Panc1 (cell line): ENCODE measurements at regions of chr17 and their contacts with region 1.

Region 1: DNA sequence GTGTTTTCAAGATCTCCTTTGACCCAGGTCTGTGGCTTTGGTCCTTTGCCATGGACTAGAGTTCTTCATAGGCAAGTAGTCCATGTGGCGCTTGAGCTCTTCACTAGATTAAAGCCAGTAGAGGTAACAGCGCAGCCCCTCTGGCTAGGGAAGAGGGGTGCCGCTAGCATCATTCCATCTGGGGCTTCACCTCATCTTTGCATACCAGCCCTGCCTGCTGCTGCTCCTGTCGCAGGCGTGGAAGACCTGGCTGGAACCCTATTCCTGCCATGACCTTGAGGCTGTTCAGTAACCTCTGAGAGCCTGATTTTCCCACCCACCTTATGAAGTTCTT is 198.4 kb downstream of the MSI2 start:
- DNase-seq: no peak
- ATAC-seq: no peak
- H3K4me3 ChIP-seq: no peak overlapping the region
- H3K27ac ChIP-seq: no peak overlapping the region
- H3K4me1 ChIP-seq: 0 out of 2 replicates have a peak, but pooled peaks cover 3% of the 10 kb centered on the region
- H3K27me3 ChIP-seq: no peaks in the 10 kb centered on the region
- CTCF ChIP-seq: no peak

Region 2: DNA sequence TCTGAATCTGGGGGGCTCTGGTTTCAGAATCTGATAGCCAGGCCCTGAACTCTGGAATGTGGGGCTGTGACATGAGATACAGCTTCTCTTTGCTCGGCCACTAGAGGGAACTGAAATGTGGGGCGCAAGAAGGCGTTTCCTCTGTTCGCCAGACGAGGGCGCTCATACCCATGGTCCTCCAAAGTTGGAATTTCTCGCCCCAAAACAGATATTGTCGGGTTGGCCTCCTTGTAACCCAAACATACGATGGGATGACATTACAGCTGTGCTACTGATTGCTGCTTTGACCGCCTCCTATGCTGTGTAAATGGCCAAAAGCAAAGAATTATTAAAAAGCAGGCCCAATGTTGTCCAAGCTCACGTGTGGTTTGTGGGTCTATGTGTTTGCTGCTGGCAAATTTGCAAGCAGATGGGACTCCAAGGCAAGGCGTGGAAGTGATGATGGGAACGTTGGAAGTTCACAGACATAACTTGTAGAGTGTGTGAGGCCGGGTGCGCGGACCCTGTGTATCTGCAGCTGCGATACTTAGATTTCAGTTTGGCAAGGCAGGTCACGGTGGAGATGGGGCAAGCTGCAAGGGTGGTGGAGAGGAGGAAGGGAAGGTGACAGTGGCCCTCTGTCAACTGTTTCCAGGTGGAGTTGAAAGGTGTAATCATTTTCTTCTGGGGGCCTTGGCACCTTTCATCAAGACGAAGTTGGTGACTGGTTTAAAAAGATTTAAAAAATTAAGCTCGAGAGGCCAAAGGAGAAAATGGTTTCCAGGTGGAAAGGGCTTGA is 211.3 kb before region 1 on chr17:
- CTCF ChIA-PET with region 1: no interaction called
- POLR2A ChIA-PET with region 1: no interaction called
- in situ Hi-C with region 1: no loop called
- intact Hi-C with region 1: no loop called
- DNase-seq: peak; percentile 59
- ATAC-seq: peak; percentile 89
- H3K4me3 ChIP-seq: no peak overlapping the region
- H3K27ac ChIP-seq: no peak overlapping the region
- H3K4me1 ChIP-seq: no peaks in the 10 kb centered on the region
- H3K27me3 ChIP-seq: peaks cover 7% of the 10 kb centered on the region; the same call in 1 of the 2 replicates
- CTCF ChIP-seq: peak; percentile 100

Region 3: GRCh38 chr17:57432520-57433277 is 22.0 kb before region 1 on chr17:
- CTCF ChIA-PET with region 1: no interaction called
- POLR2A ChIA-PET with region 1: no interaction called
- in situ Hi-C with region 1: no loop called
- intact Hi-C with region 1: no loop called
- DNase-seq: no peak
- ATAC-seq: no peak
- H3K4me3 ChIP-seq: no peak overlapping the region
- H3K27ac ChIP-seq: no peak overlapping the region
- H3K4me1 ChIP-seq: no peaks in the 10 kb centered on the region
- H3K27me3 ChIP-seq: no peaks in the 10 kb centered on the region
- CTCF ChIP-seq: no peak

Region 4: DNA sequence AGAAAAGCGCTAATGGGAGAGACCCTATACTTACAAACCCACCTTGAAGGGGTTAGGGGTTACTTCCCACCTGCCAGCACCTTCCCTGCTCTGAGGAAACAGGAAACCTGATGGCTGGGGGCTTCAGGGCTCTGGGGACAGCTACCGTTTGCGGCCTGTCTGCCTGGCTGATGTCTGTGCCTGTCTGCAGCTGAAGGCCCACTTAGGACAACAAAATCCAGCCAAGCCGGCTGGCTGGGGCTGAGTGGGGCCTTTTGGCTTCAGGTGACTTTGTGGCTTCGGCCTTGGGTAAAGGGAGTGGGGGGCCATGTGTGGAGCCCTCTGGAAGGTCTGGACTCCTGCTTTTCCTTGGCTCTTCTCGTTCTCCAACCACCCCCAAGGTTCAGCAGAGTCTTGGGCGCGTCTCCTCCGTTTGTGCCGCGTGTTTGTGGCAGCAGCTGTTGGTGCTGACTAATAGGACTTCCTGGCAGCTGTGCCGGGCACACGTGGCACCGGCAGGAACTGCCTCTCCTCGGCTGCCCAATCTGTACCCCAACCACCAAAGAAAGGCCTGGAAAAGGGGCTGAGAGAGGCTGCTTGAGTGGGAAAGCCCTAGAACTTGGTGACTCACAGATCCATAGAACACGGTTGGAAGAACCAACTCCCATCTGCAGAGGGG is 11.7 kb before region 1 on chr17:
- CTCF ChIA-PET with region 1: no interaction called
- POLR2A ChIA-PET with region 1: no interaction called
- in situ Hi-C with region 1: no loop called
- intact Hi-C with region 1: no loop called
- DNase-seq: no peak
- ATAC-seq: no peak
- H3K4me3 ChIP-seq: no peak overlapping the region
- H3K27ac ChIP-seq: no peak overlapping the region
- H3K4me1 ChIP-seq: peaks cover 6% of the 10 kb centered on the region; the same call in 1 of the 2 replicates
- H3K27me3 ChIP-seq: no peaks in the 10 kb centered on the region
- CTCF ChIP-seq: no peak

Region 5: DNA sequence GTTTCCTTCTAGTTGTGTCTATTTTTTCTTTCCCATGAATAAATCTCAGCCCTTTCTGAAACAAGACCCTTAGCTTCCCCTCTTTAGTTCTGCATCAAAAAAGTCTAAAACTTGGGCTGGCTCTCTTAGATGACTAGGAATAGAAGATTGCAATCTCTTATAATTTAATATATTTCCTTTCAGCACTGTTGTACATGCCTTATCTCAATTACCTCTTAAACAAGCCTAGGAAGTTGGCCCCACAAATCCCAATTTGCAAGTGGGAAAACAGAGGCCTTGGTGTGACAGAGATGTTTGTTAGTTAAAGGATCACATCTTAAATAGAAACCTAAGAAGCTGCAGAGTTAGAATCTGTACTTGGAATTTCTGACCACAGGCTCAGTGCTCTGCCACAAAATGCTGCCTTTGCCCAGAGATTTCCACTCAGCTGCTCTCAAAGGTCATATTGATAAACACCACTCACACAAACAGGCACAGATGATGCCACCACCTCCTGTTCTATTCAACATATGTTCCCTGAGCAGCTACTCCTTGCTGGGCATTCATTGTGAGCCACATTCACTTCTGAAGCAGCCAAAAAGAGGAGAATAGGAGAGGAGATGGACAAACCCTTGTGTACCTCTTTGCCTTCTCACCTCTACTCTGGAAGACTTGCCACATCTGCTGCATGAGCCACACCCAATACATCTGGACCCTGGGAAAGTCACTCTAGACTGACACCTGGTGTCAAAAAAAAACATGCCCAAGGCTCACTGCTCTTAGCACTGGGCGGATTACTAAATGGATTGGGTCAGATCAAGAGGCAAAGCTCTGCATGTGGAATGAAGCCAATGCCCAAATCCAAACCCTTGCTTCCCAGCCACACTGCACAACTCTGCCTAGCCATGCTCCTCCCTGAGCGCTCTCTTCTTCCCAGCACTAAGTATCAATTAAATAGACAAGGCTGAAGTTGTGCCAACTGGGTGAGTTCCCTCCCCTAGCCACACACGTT is 285.0 kb after region 1 on chr17:
- CTCF ChIA-PET with region 1: interaction called, 13 read pairs
- POLR2A ChIA-PET with region 1: no interaction called
- in situ Hi-C with region 1: no loop called
- intact Hi-C with region 1: no loop called
- DNase-seq: peak; percentile 13
- ATAC-seq: peak; percentile 80
- H3K4me3 ChIP-seq: no peak overlapping the region
- H3K27ac ChIP-seq: no peak overlapping the region
- H3K4me1 ChIP-seq: no peaks in the 10 kb centered on the region
- H3K27me3 ChIP-seq: peaks cover 8% of the 10 kb centered on the region
- CTCF ChIP-seq: peak; percentile 62